ENCODE measurements at regions of chr9 and their contacts with region 1.

Region 1: DNA sequence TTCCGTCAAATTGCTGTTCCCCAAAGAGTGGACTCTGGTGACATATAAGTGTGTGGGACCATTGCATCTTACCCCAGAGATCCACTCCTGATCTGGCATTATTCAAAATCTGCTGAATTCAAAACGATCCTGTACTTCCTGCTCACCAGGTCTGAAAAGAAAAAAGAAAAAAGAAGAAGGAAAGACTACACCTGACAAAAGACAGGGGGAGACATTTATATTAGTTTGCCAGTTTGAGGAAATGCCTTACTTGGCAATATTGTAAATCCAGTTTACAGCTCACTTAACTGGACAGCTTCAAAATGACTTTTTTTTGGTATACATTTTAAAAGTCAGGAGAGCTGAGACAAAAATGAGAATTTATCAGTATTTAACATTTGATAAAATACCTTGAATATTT is 15.0 kb upstream of the GRHPR start:
- DNase-seq: no peak
- ATAC-seq: no peak
- H3K4me3 ChIP-seq: no peak overlapping the region
- H3K4me3 Mint-ChIP-seq: no peak overlapping the region
- H3K27ac ChIP-seq: no peak overlapping the region
- H3K27ac Mint-ChIP-seq: no peak overlapping the region
- H3K4me1 ChIP-seq: peaks cover 0 to 15% of the 10 kb centered on the region in 2 experiments
- H3K4me1 Mint-ChIP-seq: peaks cover 4 to 27% (median 11%) of the 10 kb centered on the region in 3 donors
- H3K27me3 ChIP-seq: no peaks in the 10 kb centered on the region
- H3K27me3 Mint-ChIP-seq: no peaks in the 10 kb centered on the region

Region 2: GRCh38 chr9:37336150-37336549 is 71.3 kb before region 1 on chr9:
- CTCF ChIA-PET with region 1: no interaction called
- POLR2A ChIA-PET with region 1: no interaction called
- DNase-seq: no peak
- ATAC-seq: no peak
- H3K4me3 ChIP-seq: no peak overlapping the region
- H3K4me3 Mint-ChIP-seq: no peak overlapping the region
- H3K27ac ChIP-seq: no peak overlapping the region
- H3K27ac Mint-ChIP-seq: no peak overlapping the region
- H3K4me1 ChIP-seq: no peaks in the 10 kb centered on the region
- H3K4me1 Mint-ChIP-seq: peaks cover 0 to 2% (median 0%) of the 10 kb centered on the region in 3 donors
- H3K27me3 ChIP-seq: no peaks in the 10 kb centered on the region
- H3K27me3 Mint-ChIP-seq: no peaks in the 10 kb centered on the region

Region 3: GRCh38 chr9:37390759-37391158 is 16.7 kb before region 1 on chr9:
- CTCF ChIA-PET with region 1: interaction called in 1 of 2 experiments, 11 read pairs
- POLR2A ChIA-PET with region 1: no interaction called
- DNase-seq: peak in 13 of 35 experiments; percentile 6 to 48 (median 15)
- ATAC-seq: no peak
- H3K4me3 ChIP-seq: no peak overlapping the region
- H3K4me3 Mint-ChIP-seq: no peak overlapping the region
- H3K27ac ChIP-seq: no peak overlapping the region
- H3K27ac Mint-ChIP-seq: no peak overlapping the region
- H3K4me1 ChIP-seq: no peaks in the 10 kb centered on the region
- H3K4me1 Mint-ChIP-seq: peaks cover 0 to 5% (median 0%) of the 10 kb centered on the region in 3 donors
- H3K27me3 ChIP-seq: peaks cover 0 to 2% of the 10 kb centered on the region in 2 experiments
- H3K27me3 Mint-ChIP-seq: no peaks in the 10 kb centered on the region

Region 4: GRCh38 chr9:37430841-37431597 is 23.5 kb after region 1 on chr9:
- CTCF ChIA-PET with region 1: no interaction called
- POLR2A ChIA-PET with region 1: no interaction called
- DNase-seq: no peak
- ATAC-seq: no peak
- H3K4me3 ChIP-seq: no peak overlapping the region
- H3K4me3 Mint-ChIP-seq: no peak overlapping the region
- H3K27ac ChIP-seq: no peak overlapping the region
- H3K27ac Mint-ChIP-seq: no peak overlapping the region
- H3K4me1 ChIP-seq: no peaks in the 10 kb centered on the region
- H3K4me1 Mint-ChIP-seq: peaks cover 0 to 6% (median 0%) of the 10 kb centered on the region in 3 donors
- H3K27me3 ChIP-seq: no peaks in the 10 kb centered on the region
- H3K27me3 Mint-ChIP-seq: no peaks in the 10 kb centered on the region